PC-3 (cell line): ENCODE measurements at regions of chr10 and their contacts with region 1.

Region 1: GRCh38 chr10:98351831-98352402 is 63.1 kb downstream of the PYROXD2 start:
- DNase-seq: no peak
- ATAC-seq: no peak
- H3K4me3 ChIP-seq: no peak overlapping the region
- H3K27ac ChIP-seq: no peak overlapping the region
- H3K4me1 ChIP-seq: no peaks in the 10 kb centered on the region
- H3K27me3 ChIP-seq: no peaks in the 10 kb centered on the region
- CTCF ChIP-seq: no peak

Region 2: DNA sequence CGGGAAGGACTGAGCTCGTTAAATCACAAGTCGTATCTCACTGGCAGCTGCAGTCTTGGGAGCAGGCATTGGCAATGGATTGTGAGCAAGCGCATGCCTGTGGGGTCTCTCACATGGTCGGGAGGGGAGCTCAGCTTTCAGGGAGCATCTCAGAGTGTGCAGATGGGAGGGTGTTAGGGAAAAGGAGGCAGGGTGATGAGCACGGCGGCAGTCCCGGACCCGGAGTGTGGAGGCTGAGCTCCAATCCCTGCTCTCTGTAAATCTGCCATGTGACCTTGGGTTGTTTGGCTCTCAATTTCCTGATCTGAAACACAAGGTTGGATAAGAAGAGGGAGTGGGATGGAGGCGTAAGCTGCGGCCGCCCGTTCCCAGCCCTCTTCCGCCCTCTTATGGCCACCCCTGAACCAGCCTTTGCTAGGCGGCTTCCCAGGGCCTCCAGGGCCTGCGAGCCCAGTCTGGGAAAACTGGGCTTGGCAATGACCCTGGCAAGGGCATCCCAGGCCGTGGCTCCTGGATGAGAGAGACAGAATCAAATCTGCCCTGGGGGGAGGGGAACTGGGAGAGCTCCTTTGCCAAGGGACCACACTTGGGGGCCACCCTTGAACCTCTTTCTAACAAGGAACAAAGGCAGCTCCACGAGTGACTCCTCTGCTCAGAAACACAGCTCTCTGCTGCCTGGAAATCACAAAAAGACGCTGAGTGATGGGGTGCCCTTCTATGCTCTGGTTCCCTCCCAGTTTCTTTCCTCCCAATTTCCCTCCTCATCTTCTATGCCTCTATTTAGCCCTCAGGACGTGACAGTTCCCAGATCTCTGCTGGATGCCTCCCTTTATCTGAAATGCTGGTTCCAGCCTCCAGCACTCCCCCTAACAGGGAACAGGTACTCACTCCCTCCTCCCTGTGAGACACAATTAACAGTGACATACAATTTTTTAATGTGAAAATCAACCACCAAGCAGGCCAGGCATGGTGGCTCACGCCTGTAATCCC is 42.3 kb before region 1 on chr10:
- CTCF ChIA-PET with region 1: no interaction called
- POLR2A ChIA-PET with region 1: no interaction called
- intact Hi-C with region 1: no loop called
- DNase-seq: peak; percentile 73
- ATAC-seq: peak; percentile 94
- H3K4me3 ChIP-seq: no peak overlapping the region
- H3K27ac ChIP-seq: no peak overlapping the region
- H3K4me1 ChIP-seq: peaks cover 19% of the 10 kb centered on the region
- H3K27me3 ChIP-seq: no peaks in the 10 kb centered on the region
- CTCF ChIP-seq: peak; percentile 72

Region 3: DNA sequence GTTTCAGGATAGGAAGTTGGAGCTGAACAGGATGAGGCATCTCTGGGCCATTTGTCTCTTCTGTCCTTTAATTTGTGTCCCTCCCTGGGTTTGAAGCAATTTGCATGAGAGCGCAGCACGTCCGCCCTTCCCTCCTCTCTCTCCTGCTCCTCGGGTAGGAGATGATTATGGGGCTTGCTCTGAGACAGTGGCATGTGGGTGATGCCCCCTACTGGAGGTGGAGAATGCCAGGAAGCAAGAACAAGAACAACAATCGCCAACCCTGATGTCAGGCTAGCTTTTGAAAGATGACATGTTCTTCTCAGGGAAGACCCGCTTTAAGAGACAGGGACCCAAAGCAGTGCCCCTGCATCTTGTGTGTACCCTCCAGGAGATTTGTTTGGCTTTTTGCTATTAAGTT is 20.0 kb before region 1 on chr10:
- CTCF ChIA-PET with region 1: interaction called, 4 read pairs
- POLR2A ChIA-PET with region 1: no interaction called
- intact Hi-C with region 1: loop called (anchors 2 kb)
- DNase-seq: no peak
- ATAC-seq: no peak
- H3K4me3 ChIP-seq: no peak overlapping the region
- H3K27ac ChIP-seq: no peak overlapping the region
- H3K4me1 ChIP-seq: peaks cover 29% of the 10 kb centered on the region
- H3K27me3 ChIP-seq: no peaks in the 10 kb centered on the region
- CTCF ChIP-seq: peak; percentile 51; the same call in 1 of the 2 replicates